Activated CD8-positive, alpha-beta T cell treated with anti-CD3 and anti-CD28 coated beads, Interleukin-2, amount 10 ng/mL, durations not matched to agents 7 days and 5 days (primary cell): ENCODE measurements at regions of chr4 and their contacts with region 1.

Region 1: GRCh38 chr4:40309250-40309774 is 25.8 kb upstream of the CHRNA9 start:
- DNase-seq: peak; percentile 95
- ATAC-seq: peak; percentile 68
- H3K4me3 Mint-ChIP-seq: peak overlapping the region; percentile 79
- H3K27ac Mint-ChIP-seq: peak overlapping the region; percentile 98
- H3K4me1 Mint-ChIP-seq: peaks cover 86% of the 10 kb centered on the region
- H3K27me3 Mint-ChIP-seq: no peaks in the 10 kb centered on the region

Region 2: GRCh38 chr4:40205259-40206198 is 103.8 kb before region 1 on chr4:
- CTCF ChIA-PET with region 1: interaction called, 149 read pairs
- POLR2A ChIA-PET with region 1: interaction called, 155 read pairs
- DNase-seq: peak; percentile 73
- ATAC-seq: peak; percentile 50
- H3K4me3 Mint-ChIP-seq: peak overlapping the region; percentile 93
- H3K27ac Mint-ChIP-seq: peak overlapping the region; percentile 96
- H3K4me1 Mint-ChIP-seq: peaks cover 55% of the 10 kb centered on the region
- H3K27me3 Mint-ChIP-seq: no peaks in the 10 kb centered on the region

Region 3: GRCh38 chr4:40238700-40239548 is 70.4 kb before region 1 on chr4:
- CTCF ChIA-PET with region 1: interaction called, 30 read pairs
- POLR2A ChIA-PET with region 1: interaction called, 9 read pairs
- DNase-seq: peak; percentile 92
- ATAC-seq: peak; percentile 91
- H3K4me3 Mint-ChIP-seq: peak overlapping the region; percentile 71
- H3K27ac Mint-ChIP-seq: peak overlapping the region; percentile 96
- H3K4me1 Mint-ChIP-seq: peaks cover 89% of the 10 kb centered on the region
- H3K27me3 Mint-ChIP-seq: no peaks in the 10 kb centered on the region

Region 4: DNA sequence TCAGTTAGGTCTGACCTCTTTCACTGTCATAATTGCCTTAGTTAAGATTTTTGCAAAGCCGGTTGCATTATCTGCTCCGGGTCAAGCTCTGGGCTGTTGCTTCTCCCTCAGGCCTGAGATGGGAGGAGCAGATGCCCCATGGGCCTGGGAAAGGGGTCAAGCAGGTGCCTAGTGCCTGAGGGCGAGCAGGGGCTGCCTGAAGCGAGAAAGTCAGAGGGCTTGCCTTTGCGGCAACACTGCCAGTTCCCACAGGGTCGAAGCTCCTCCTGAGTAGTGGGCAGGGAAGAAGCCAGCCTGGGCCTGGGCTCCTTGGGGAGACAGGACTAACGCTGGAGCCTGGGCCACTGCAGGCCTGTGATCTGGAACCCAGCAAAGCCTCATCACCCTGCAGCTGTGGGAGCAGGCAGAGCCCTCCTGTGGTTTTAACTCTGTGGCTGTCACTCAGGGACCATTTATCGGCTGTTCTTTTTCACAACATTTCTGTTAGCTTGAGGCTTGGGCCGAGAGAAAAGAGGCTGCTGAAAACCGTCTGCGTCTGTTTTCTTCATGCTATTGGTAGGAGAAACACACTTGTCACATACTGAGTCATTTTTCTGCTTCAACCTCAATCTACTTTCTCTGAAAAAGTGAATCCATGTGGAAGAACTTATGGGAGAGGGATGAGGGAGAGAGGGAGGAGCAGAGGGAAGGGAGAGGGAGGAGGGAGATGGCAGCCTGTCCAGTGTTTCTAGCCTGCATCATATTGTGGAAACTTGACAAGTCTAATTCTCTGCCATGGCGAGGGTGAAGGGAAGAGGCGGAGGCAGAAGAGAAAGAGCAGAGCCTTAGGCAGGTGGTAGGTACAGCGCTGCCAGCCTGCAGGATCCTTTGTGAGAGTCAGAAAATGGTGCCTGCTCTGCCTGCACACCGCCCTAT is 44.1 kb before region 1 on chr4:
- CTCF ChIA-PET with region 1: interaction called, 16 read pairs
- POLR2A ChIA-PET with region 1: no interaction called
- DNase-seq: peak; percentile 75
- ATAC-seq: peak; percentile 86
- H3K4me3 Mint-ChIP-seq: peak overlapping the region; percentile 73
- H3K27ac Mint-ChIP-seq: peak overlapping the region; percentile 94
- H3K4me1 Mint-ChIP-seq: peaks cover 49% of the 10 kb centered on the region
- H3K27me3 Mint-ChIP-seq: no peaks in the 10 kb centered on the region

Region 5: DNA sequence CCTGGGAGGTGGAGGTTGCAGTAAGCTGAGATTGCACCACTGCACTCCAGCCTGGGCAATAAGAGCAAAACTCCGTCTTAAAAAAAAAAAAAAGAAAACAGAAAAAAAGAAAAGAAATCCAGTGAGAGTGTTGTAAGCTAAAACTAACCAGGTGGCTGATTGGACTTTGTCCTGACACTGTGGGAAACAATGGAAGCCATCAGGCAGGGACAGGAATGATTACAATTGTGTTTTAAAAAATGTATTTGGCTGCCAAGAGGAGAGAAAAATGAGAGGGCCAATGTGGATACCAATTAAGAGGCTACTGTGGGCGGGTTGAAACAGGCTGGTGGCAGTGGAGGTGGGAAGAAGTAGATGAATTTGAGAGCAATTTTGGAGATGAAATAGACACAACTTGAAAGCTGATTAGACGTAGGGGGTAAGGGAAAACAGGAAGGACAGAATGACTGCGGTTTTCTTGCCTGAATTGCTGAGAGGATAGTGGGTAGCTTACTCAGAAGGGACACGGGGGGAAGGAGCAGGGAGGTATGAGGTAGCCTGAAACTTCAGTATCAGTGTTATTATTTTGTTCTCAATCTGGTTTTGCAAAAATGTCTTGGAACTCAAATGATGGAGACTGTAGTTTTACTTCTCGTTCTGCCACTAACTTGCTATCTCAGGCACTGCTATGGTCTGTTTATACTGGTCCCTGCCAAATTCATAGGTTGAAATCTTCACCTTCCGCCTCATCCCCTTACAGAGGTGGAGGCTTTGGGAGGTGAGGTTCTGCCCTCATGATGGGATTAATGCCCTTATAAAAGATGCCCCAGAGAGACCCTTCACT is 19.7 kb before region 1 on chr4:
- CTCF ChIA-PET with region 1: interaction called, 36 read pairs
- POLR2A ChIA-PET with region 1: interaction called, 24 read pairs
- DNase-seq: peak; percentile 31
- ATAC-seq: peak; percentile 74
- H3K4me3 Mint-ChIP-seq: peak overlapping the region; percentile 42
- H3K27ac Mint-ChIP-seq: peak overlapping the region; percentile 89
- H3K4me1 Mint-ChIP-seq: peaks cover 46% of the 10 kb centered on the region
- H3K27me3 Mint-ChIP-seq: no peaks in the 10 kb centered on the region